Activated CD4-positive, alpha-beta T cell treated with anti-CD3 and anti-CD28 coated beads, Interleukin-2, amount 10 ng/mL, durations not matched to agents 24 days and 14 days (primary cell): ENCODE measurements at regions of chr7 and their contacts with region 1.

Region 1: GRCh38 chr7:18866359-18867036 is 250.9 kb downstream of the TWIST1 start:
- DNase-seq: peak; percentile 64
- H3K4me3 Mint-ChIP-seq: no peak overlapping the region
- H3K27ac Mint-ChIP-seq: peak overlapping the region; percentile 86
- H3K4me1 Mint-ChIP-seq: peaks cover 25% of the 10 kb centered on the region
- H3K27me3 Mint-ChIP-seq: no peaks in the 10 kb centered on the region

Region 2: DNA sequence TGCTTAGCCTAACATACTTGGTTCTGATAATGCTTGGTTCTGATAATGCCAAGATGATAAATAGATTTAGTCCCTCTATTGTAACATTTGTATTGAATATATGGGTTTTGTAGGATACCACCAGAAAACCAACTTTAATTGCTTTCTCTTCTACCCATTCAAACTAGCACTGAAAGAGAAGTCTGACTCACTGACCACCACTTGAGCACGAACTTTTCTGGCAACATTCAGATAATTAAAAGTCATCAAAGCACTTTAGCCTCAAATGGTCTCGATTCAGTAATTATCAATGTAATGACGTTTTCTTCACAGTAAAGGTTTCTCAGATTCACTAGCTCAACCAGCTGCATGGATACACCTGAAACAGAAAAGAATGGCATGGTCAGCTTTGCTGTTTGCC is 308.0 kb before region 1 on chr7:
- intact Hi-C with region 1: no loop called
- DNase-seq: no peak
- H3K4me3 Mint-ChIP-seq: no peak overlapping the region
- H3K27ac Mint-ChIP-seq: no peak overlapping the region
- H3K4me1 Mint-ChIP-seq: no peaks in the 10 kb centered on the region
- H3K27me3 Mint-ChIP-seq: no peaks in the 10 kb centered on the region

Region 3: DNA sequence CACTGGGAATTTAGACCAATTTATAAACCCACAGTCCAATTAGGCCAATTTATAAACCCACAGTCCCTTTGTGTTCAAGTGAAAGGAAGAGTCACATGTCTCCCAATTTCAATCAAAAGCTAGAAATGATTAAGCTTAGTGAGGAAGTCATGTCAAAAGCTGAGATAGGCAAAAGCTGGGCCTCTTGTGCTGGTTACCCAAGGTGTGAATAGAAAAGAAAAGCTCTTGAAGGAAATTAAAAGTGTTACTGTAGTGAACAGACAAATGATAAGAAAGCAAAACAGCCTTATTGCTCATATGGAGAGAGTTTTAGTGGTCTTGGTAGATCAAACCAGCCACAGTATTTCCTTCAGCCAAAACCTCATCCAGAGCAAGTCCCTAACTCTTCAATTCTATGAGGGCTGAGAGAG is 125.9 kb before region 1 on chr7:
- intact Hi-C with region 1: loop called (anchors 5 kb)
- DNase-seq: peak; percentile 58
- H3K4me3 Mint-ChIP-seq: no peak overlapping the region
- H3K27ac Mint-ChIP-seq: peak overlapping the region; percentile 66
- H3K4me1 Mint-ChIP-seq: peaks cover 3% of the 10 kb centered on the region
- H3K27me3 Mint-ChIP-seq: no peaks in the 10 kb centered on the region

Region 4: DNA sequence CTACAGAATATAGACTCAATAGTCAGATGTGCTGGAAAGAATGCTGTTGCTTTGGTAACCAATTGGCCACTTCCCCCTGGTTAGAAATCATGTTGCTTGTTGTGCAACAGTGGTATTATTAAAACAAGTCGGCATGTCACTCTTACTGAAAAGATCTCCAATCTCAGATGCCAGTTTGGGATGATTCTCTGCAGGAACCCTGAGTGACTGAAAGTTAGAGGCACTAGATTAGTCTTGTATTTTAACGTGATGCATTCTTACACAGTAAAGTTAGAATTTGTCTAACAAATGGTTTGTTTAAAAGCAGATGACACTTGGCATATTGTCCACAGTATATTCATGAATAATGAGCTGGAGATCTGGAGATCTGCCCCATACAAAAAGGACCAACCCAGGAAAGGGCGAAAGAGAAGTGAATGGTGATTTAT is 36.6 kb before region 1 on chr7:
- intact Hi-C with region 1: no loop called
- DNase-seq: no peak
- H3K4me3 Mint-ChIP-seq: no peak overlapping the region
- H3K27ac Mint-ChIP-seq: no peak overlapping the region
- H3K4me1 Mint-ChIP-seq: peaks cover 3% of the 10 kb centered on the region
- H3K27me3 Mint-ChIP-seq: peaks cover 2% of the 10 kb centered on the region